WTC11 (cell line): ENCODE measurements at regions of chr19 and their contacts with region 1.

Region 1: GRCh38 chr19:51552996-51553725 is 17.9 kb upstream of the ZNF175 start:
- DNase-seq: peak; percentile 97
- ATAC-seq: peak; percentile 99
- H3K4me3 Mint-ChIP-seq: peak overlapping the region; percentile 15; the same call in 1 of the 2 replicates
- H3K27ac Mint-ChIP-seq: no peak overlapping the region
- H3K4me1 Mint-ChIP-seq: peaks cover 3% of the 10 kb centered on the region
- H3K27me3 Mint-ChIP-seq: peaks cover 38% of the 10 kb centered on the region
- CTCF ChIP-seq: no peak

Region 2: DNA sequence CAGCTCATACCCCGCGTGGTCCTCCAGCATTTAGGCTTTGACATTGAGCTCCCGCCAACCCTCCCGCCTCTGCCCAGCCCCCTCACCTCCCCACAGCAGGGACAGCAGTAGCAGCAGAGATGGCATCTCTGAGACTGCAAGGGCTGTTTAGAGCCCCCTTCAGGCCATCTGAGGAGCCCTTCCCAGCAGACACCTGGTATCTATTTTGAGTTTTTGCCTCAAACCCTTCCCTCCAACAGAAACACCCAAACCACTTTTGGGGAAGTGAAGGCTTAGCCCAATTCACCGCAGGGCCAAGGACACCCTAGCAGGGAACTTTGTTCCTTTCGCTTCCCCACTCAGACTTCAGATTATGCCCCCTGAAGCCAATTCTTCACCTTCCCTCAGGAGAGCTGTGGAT is 11.6 kb after region 1 on chr19:
- CTCF ChIA-PET with region 1: interaction called, 12 read pairs
- POLR2A ChIA-PET with region 1: no interaction called
- DNase-seq: peak; percentile 57
- ATAC-seq: peak; percentile 98
- H3K4me3 Mint-ChIP-seq: no peak overlapping the region
- H3K27ac Mint-ChIP-seq: no peak overlapping the region
- H3K4me1 Mint-ChIP-seq: no peaks in the 10 kb centered on the region
- H3K27me3 Mint-ChIP-seq: peaks cover 76% of the 10 kb centered on the region
- CTCF ChIP-seq: no peak

Region 3: GRCh38 chr19:51576850-51577249 is 23.7 kb after region 1 on chr19:
- CTCF ChIA-PET with region 1: no interaction called
- POLR2A ChIA-PET with region 1: no interaction called
- DNase-seq: no peak
- ATAC-seq: no peak
- H3K4me3 Mint-ChIP-seq: no peak overlapping the region
- H3K27ac Mint-ChIP-seq: no peak overlapping the region
- H3K4me1 Mint-ChIP-seq: peaks cover 3% of the 10 kb centered on the region; the same call in 1 of the 2 replicates
- H3K27me3 Mint-ChIP-seq: no peaks in the 10 kb centered on the region
- CTCF ChIP-seq: no peak